ENCODE measurements at regions of chrX and their contacts with region 1.

Region 1: DNA sequence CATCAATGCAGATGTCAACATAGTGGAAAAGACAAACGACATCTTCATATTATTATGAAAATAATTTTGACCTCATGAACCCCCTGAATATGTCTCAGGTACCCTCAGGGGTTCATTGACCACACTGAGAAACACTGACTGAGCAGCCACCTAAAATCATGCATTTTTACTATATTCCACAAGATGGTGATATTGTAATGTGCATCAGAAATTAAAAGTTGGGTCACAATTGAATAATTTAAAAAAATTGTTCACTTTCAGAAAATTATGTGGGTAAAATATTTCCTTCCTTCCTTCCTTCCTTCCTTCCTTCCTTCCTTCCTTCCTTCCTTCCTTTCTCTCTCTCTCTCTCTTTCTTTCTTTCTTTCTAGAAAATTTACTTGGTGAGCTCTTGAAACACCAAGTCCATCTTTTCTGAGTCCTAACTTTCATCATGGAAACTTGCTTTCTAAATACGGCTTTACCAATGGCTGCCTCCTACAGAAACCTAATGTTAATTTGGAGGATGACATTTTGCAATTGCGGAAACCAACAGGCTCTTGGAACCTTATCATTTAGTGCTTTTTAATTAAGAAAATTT is 103.6 kb downstream of the RTL3 start:
- DNase-seq: peak; percentile 2
- H3K4me3 ChIP-seq: no peak overlapping the region
- H3K27ac ChIP-seq: no peak overlapping the region
- H3K4me1 ChIP-seq: no peaks in the 10 kb centered on the region
- CTCF ChIP-seq: peak; percentile 62

Region 2: GRCh38 chrX:78754917-78755316 is 199.4 kb after region 1 on chrX:
- CTCF ChIA-PET with region 1: no interaction called
- POLR2A ChIA-PET with region 1: no interaction called
- intact Hi-C with region 1: loop called (anchors 5 kb)
- DNase-seq: peak; percentile 74
- H3K4me3 ChIP-seq: peak overlapping the region; percentile 34
- H3K27ac ChIP-seq: peak overlapping the region; percentile 50
- H3K4me1 ChIP-seq: peaks cover 36% of the 10 kb centered on the region
- CTCF ChIP-seq: peak; percentile 63

Measured in OCI-LY7 (cell line).